ENCODE measurements at regions of chr10 and their contacts with region 1.

Region 1: GRCh38 chr10:110746254-110746826 is 102.2 kb downstream of the RBM20 start:
- DNase-seq: peak; percentile 21 to 63
- ATAC-seq: peak; percentile 74 to 93
- H3K4me3 ChIP-seq: no peak overlapping the region
- H3K27ac ChIP-seq: peak overlapping the region in 1 of 4 donors; percentile 18
- H3K4me1 ChIP-seq: peaks cover 3 to 6% of the 10 kb centered on the region in 2 donors
- H3K27me3 ChIP-seq: no peaks in the 10 kb centered on the region
- CTCF ChIP-seq: peak; percentile 76 to 88 (median 86)
- POLR2A ChIP-seq: no peak

Region 2: DNA sequence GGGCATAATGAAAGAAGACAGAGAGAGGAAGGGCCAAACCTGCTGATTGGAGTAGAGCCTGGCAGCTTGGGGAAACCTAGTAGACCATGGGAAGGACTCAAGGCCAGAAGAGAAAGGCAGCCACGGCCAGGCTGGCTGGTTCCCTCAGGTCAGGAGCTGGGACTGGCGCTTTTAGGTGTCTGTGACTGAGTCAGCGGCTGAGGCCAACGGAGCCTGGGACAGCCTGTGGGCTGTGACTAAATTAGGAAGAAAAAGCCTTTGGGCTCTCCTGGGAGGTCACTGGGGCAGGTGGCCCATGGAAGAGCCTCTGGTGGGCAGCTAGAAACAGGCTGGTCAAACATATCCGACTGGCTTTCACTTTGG is 16.5 kb after region 1 on chr10:
- in situ Hi-C with region 1: no loop called
- intact Hi-C with region 1: loop called (anchors 1 kb)
- DNase-seq: peak; percentile 46 to 68
- ATAC-seq: peak; percentile 32 to 49
- H3K4me3 ChIP-seq: peak overlapping the region in 1 of 4 donors; percentile 13
- H3K27ac ChIP-seq: peak overlapping the region; percentile 82 to 88 (median 85)
- H3K4me1 ChIP-seq: peaks cover 38 to 47% of the 10 kb centered on the region in 2 donors
- H3K27me3 ChIP-seq: no peaks in the 10 kb centered on the region
- CTCF ChIP-seq: no peak
- POLR2A ChIP-seq: peak in 1 of 2 donors; percentile 36

Region 3: DNA sequence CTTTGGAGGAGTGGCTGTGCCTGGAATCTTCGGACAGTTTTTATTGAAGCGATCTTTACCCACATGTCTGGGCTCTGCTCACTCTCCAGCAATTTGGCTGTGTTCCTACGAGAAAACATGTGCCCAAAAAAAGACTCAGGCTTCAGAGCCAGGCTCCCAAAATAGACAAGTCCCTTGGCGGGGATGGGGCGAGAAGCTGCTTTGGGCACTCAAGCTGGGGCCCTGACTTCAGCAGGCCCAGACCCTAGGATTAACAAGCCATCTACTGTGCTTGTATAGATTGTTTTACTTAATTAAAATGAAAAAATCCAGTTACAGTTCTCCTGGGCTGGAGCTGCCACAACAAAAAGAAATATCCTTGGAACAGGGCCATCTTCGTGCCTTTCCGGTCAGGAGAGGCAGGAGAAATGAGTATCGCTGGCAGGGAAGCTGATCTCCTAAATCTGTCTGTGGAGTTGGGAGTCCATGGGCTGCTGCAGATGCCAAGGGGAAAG is 74.0 kb after region 1 on chr10:
- in situ Hi-C with region 1: no loop called
- intact Hi-C with region 1: loop called (anchors 10 kb)
- DNase-seq: peak; percentile 76 to 87
- ATAC-seq: peak; percentile 88
- H3K4me3 ChIP-seq: no peak overlapping the region
- H3K27ac ChIP-seq: peak overlapping the region; percentile 87 to 96 (median 90)
- H3K4me1 ChIP-seq: peaks cover 74 to 79% of the 10 kb centered on the region in 2 donors
- H3K27me3 ChIP-seq: no peaks in the 10 kb centered on the region
- CTCF ChIP-seq: no peak
- POLR2A ChIP-seq: peak in 1 of 2 donors; percentile 20

Region 4: DNA sequence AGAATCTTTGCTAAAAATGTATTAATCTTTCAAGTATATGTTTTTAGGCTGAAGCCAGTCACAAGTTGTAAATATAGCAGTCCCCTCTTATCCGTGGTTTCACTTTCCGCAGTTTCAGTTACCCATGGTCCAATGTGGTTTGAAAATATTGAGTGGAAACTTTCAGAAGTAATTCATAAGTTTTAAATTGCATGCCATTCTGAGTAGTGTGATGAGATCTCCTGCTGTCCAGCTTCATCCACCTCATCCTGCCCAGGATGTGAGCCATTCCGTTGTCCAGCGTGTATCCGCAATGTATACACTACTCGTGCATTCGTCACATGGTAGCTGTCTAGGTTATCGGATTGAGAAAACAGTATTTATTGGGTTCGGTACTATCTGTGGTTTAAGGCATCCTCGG is 137.6 kb after region 1 on chr10:
- in situ Hi-C with region 1: loop called in 1 of 4 experiments (anchors 10 kb)
- intact Hi-C with region 1: no loop called
- DNase-seq: no peak
- ATAC-seq: no peak
- H3K4me3 ChIP-seq: no peak overlapping the region
- H3K27ac ChIP-seq: no peak overlapping the region
- H3K4me1 ChIP-seq: peaks cover 0 to 7% of the 10 kb centered on the region in 2 donors
- H3K27me3 ChIP-seq: no peaks in the 10 kb centered on the region
- CTCF ChIP-seq: no peak
- POLR2A ChIP-seq: no peak

Region 5: DNA sequence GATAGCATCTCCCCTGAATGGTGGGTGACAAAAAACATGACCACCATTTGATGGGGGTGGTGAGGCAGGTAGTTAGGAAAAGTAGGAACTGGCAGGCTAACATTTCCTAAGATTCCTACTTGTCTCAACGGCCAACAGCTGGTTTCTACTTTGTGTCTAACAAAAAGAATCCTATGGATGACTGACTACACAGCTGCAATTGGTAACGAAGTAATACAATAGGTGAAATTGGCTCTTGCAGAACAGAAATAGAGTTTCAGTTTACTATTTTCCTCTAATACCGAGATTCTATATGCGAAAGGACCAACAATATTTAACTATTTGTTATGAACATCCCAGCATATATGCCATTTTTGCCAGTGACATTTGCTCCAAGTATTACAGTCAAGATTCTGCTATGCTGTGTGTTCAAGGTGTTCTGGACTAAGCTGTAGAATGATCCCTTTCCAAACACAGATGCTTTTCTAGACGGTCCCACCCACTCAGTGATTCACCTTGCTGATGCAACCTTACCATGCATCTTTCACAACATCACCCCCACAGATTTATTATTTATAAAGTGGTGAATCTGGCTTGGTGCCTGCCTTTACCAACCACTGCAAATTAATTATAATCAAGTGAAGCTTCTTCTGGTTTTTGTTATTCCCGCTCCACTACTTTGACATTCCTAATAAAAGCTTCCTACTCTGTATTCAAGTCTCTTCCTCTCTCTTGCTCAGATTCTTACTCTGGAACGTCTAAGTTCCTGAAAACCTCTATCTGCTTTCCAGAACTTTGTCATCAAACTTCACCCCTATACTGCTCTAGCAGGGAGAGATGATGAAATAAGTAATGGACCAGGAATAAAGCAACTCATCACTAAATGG is 155.8 kb after region 1 on chr10:
- in situ Hi-C with region 1: loop called in 1 of 4 experiments (anchors 5 kb)
- intact Hi-C with region 1: no loop called
- DNase-seq: no peak
- ATAC-seq: no peak
- H3K4me3 ChIP-seq: no peak overlapping the region
- H3K27ac ChIP-seq: no peak overlapping the region
- H3K4me1 ChIP-seq: no peaks in the 10 kb centered on the region
- H3K27me3 ChIP-seq: no peaks in the 10 kb centered on the region
- CTCF ChIP-seq: no peak
- POLR2A ChIP-seq: no peak